CD8-positive, alpha-beta T cell (primary cell): ENCODE measurements at regions of chr6 and their contacts with region 1.

Region 1: GRCh38 chr6:26031595-26032339 is 55.5 kb upstream of the HFE start:
- DNase-seq: peak; percentile 79 to 93 (median 88)
- ATAC-seq: peak; percentile 63
- H3K4me3 ChIP-seq: peak overlapping the region; percentile 68 to 71
- H3K4me3 Mint-ChIP-seq: peak overlapping the region; percentile 93
- H3K27ac ChIP-seq: peak overlapping the region; percentile 76 to 79
- H3K27ac Mint-ChIP-seq: peak overlapping the region; percentile 96
- H3K4me1 ChIP-seq: peaks cover 31% of the 10 kb centered on the region
- H3K4me1 Mint-ChIP-seq: peaks cover 46% of the 10 kb centered on the region
- H3K27me3 ChIP-seq: no peaks in the 10 kb centered on the region
- H3K27me3 Mint-ChIP-seq: no peaks in the 10 kb centered on the region
- CTCF ChIP-seq: no peak

Region 2: GRCh38 chr6:26020329-26021000 is 11.3 kb before region 1 on chr6:
- CTCF ChIA-PET with region 1: interaction called, 26 read pairs
- POLR2A ChIA-PET with region 1: interaction called, 248 read pairs
- intact Hi-C with region 1: no loop called
- DNase-seq: peak; percentile 69 to 95 (median 78)
- ATAC-seq: peak; percentile 47
- H3K4me3 ChIP-seq: peak overlapping the region; percentile 85 to 88
- H3K4me3 Mint-ChIP-seq: peak overlapping the region; percentile 88
- H3K27ac ChIP-seq: peak overlapping the region; percentile 95 to 98
- H3K27ac Mint-ChIP-seq: peak overlapping the region; percentile 99
- H3K4me1 ChIP-seq: peaks cover 10% of the 10 kb centered on the region
- H3K4me1 Mint-ChIP-seq: peaks cover 41% of the 10 kb centered on the region
- H3K27me3 ChIP-seq: no peaks in the 10 kb centered on the region
- H3K27me3 Mint-ChIP-seq: no peaks in the 10 kb centered on the region
- CTCF ChIP-seq: no peak